ENCODE measurements at regions of chr2 and their contacts with region 1.

Region 1: DNA sequence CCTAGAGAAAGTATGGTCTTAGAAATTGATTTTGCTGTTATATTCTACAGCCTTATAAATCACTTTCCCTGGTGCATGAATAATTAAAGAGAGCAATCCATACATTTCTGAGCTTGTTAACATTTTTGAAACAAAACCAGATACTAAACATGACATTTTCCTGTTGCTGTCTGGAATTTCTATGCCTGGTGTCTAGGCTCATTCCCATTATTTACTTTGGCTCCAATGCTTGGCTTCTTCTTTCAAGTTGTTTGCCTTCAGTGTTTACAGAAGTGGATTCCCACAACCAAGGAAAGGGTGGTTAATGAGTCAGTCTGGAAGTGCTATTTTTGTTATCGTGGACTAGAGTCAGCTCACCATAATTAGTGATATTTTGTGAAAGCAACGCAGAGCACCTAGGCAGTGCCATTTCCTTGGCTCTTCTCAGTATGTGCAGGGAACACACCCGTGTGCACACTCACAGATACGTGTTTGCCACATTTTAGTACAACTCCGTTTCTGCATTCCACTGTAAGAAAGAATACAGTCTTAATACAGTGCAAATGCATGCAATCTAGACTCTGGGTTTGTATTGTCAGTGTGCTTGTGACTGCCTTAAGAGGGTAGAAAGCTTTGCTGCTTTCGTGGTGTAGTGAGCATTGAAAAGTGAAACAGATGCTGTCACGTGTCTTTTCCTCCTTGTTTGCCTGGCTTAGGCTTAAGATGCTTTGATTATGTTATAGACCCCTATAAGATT is 185.0 kb upstream of the RASGRP3 start:
- DNase-seq: peak; percentile 92
- ATAC-seq: peak; percentile 96
- H3K4me3 ChIP-seq: peak overlapping the region; percentile 44
- H3K27ac ChIP-seq: peak overlapping the region; percentile 91
- H3K4me1 ChIP-seq: peaks cover 26% of the 10 kb centered on the region
- H3K27me3 ChIP-seq: no peaks in the 10 kb centered on the region
- CTCF ChIP-seq: no peak

Region 2: DNA sequence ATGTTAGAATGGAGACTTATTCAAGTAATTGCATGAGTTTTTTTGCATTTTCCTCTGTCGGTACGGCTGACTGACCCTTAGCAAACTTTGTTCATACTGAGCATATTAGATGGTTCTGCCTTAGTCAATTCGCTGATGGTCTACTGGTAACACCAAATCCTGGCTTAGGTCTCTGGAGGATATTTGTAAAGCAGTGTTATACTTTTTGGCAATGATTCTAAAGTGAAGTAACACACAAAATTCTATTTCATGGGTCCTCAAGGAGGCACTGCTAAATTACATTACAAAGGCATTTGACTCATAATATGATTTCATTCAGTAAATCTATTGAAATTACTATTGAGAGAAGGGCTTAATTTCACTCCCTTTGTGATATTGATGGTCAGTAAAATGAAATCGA is 61.8 kb before region 1 on chr2:
- CTCF ChIA-PET with region 1: no interaction called
- POLR2A ChIA-PET with region 1: no interaction called
- intact Hi-C with region 1: no loop called
- DNase-seq: peak; percentile 33
- ATAC-seq: peak; percentile 8; the same call in 1 of the 2 replicates
- H3K4me3 ChIP-seq: no peak overlapping the region
- H3K27ac ChIP-seq: peak overlapping the region; percentile 93
- H3K4me1 ChIP-seq: peaks cover 38% of the 10 kb centered on the region
- H3K27me3 ChIP-seq: no peaks in the 10 kb centered on the region
- CTCF ChIP-seq: peak; percentile 25; the same call in 1 of the 2 replicates

Region 3: DNA sequence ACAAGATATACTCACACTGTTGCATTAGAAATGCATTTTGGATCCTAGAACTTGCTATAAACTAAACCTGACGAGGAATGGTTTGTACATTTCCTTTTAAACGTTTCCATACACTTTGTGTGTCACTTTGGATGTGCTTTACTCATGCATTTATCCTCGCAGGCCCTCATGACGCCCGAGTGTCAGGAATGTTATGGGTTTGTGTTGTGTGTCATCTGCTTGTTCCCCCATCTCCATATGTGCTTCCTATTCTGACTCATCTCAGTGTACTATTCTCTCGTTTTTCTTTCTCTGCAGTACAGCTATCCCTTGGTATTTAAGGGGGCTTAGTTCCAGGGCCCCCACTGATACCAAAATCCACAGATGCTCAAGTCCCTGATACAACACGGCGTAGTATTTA is 63.5 kb after region 1 on chr2:
- CTCF ChIA-PET with region 1: no interaction called
- POLR2A ChIA-PET with region 1: no interaction called
- intact Hi-C with region 1: loop called (anchors 10 kb)
- DNase-seq: peak; percentile 85
- ATAC-seq: peak; percentile 95
- H3K4me3 ChIP-seq: no peak overlapping the region
- H3K27ac ChIP-seq: peak overlapping the region; percentile 90
- H3K4me1 ChIP-seq: peaks cover 16% of the 10 kb centered on the region
- H3K27me3 ChIP-seq: no peaks in the 10 kb centered on the region
- CTCF ChIP-seq: no peak

Region 4: DNA sequence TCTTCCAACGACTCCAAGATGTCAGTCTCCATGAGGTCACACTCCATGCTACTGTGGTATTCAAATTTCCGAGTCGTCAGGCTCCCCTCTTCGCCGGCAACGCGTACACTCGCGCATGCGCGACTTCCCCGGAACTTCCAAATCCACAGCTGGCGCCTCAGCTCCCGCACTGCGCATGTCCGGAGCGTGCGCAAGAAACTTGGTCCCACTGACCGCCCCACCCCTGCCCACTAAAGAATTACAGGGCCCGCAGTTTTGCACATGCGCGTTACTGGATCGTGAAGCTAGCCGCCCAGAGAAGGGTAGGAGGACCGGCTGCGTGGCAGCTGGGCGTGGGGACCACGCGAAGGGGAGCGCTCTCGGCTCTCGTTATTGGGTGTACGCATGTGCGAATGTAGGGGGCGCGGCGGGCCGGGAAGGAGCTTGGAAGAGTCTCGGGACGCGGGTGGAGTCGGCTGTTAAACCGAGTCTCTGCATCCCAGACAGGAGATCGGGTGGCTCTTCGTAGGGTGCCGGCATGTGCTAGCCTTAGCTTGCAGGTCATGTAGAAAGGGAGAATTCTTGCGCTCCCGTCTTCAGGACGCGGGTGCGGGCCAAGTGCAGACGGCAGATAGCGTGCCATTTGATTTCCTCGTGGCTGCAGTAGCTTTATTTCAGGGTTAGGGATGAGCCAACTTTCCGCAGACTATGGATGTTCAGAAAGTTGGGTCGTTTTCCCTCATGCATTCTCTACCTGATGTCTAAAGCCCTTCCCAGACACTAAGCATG is 307.9 kb after region 1 on chr2 and contains the start of gene FAM98A:
- CTCF ChIA-PET with region 1: no interaction called
- POLR2A ChIA-PET with region 1: no interaction called
- intact Hi-C with region 1: loop called (anchors 2 kb)
- DNase-seq: peak; percentile 99
- ATAC-seq: peak; percentile 93
- H3K4me3 ChIP-seq: peak within 1 kb of the TSS; percentile 93
- H3K27ac ChIP-seq: peak within 1 kb of the TSS; percentile 37
- H3K4me1 ChIP-seq: peaks cover 16% of the 10 kb centered on the region
- H3K27me3 ChIP-seq: no peaks in the 10 kb centered on the region
- CTCF ChIP-seq: no peak; the same call in 1 of the 2 replicates
- total RNA-seq, gene FAM98A: 22.4 and 30.1 TPM in 2 replicates

Measured in PC-3 (cell line).